ENCODE measurements at regions of chr11 and their contacts with region 1.

Region 1: DNA sequence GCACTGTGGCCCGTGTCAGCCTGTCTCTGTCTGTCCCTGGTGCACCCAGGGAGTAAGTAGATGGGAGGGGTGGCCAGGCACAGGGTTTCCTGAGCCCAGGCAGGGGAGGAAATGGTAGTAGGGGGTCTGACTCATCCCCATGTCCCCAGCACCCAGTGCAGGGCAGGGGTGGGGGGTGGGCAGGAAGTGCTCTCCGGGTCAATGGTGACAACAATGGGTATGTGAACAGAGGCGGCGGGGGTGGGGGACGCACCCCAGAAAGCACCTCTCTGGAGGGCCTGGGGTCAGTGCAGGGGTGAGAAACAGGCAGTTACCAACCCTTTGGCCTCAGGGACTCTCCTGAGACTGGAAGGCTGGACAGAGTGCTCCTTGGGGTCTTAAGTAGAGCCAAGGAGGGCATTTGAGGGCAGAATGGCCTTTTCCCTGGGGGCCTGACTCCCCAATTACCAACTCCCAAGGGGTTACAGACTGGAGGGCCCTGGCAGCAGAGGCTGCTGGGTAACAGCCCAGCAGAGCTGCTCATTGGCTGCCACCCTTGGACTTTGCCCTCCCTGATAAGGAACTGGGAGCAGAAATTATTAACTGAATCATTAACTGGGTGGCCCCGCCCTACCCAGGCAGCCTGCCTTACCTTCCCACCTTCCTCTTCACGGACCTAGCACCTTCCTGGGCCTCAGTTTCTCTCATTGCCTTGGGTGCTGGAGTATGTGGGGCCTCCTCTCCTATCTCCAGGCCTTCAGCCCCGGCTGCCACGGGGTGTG is 4.2 kb downstream of the MYRF start:
- DNase-seq: peak; percentile 73
- ATAC-seq: peak; percentile 85
- H3K4me3 ChIP-seq: no peak overlapping the region
- H3K27ac ChIP-seq: no peak overlapping the region
- H3K4me1 ChIP-seq: peaks cover 8% of the 10 kb centered on the region
- H3K27me3 ChIP-seq: no peaks in the 10 kb centered on the region; a peak in 1 of 4 replicates
- CTCF ChIP-seq: no peak
- EP300 ChIP-seq: peak; percentile 48 to 49; a peak in 3 of 4 replicates
- POLR2A ChIP-seq: no peak; the same call in 1 of the 2 replicates
- RAD21 ChIP-seq: no peak

Region 2: DNA sequence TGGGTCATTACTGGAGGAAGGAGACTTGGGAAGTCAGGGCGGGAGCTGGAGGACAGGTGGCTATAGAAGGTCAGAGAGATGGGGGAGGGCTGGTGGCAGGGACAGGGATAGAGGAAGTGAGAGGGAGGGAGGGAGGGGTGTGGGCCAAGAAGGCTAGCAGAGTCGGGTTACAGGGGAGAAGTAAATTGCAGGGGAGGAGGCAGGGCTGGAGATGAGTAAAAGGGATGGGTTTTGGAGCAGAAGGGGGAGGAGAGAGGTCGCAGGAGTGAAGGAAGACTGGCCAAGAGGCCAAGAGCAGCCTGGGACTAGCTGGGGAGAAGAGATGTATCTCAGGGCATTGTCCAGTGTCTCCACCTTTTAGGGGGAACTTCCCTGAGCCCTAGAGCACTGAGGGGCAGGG is 215.0 kb before region 1 on chr11:
- CTCF ChIA-PET with region 1: no interaction called
- POLR2A ChIA-PET with region 1: no interaction called
- RAD21 ChIA-PET with region 1: no interaction called
- SMC1A ChIA-PET with region 1: no interaction called
- in situ Hi-C with region 1: no loop called
- intact Hi-C with region 1: no loop called
- DNase-seq: no peak
- ATAC-seq: peak; percentile 55
- H3K4me3 ChIP-seq: no peak overlapping the region
- H3K27ac ChIP-seq: no peak overlapping the region
- H3K4me1 ChIP-seq: no peaks in the 10 kb centered on the region
- H3K27me3 ChIP-seq: no peaks in the 10 kb centered on the region; a peak in 2 of 4 replicates
- CTCF ChIP-seq: no peak
- EP300 ChIP-seq: no peak
- POLR2A ChIP-seq: no peak
- RAD21 ChIP-seq: no peak

Region 3: GRCh38 chr11:61688365-61689163 is 68.1 kb before region 1 on chr11:
- CTCF ChIA-PET with region 1: no interaction called
- POLR2A ChIA-PET with region 1: no interaction called
- RAD21 ChIA-PET with region 1: no interaction called
- SMC1A ChIA-PET with region 1: no interaction called
- in situ Hi-C with region 1: no loop called
- intact Hi-C with region 1: no loop called
- DNase-seq: no peak
- ATAC-seq: no peak
- H3K4me3 ChIP-seq: no peak overlapping the region
- H3K27ac ChIP-seq: no peak overlapping the region
- H3K4me1 ChIP-seq: no peaks in the 10 kb centered on the region
- H3K27me3 ChIP-seq: peaks cover 2 to 3% of the 10 kb centered on the region in 2 experiments; a peak in 3 of 4 replicates
- CTCF ChIP-seq: no peak
- EP300 ChIP-seq: no peak
- POLR2A ChIP-seq: no peak
- RAD21 ChIP-seq: no peak

Region 4: DNA sequence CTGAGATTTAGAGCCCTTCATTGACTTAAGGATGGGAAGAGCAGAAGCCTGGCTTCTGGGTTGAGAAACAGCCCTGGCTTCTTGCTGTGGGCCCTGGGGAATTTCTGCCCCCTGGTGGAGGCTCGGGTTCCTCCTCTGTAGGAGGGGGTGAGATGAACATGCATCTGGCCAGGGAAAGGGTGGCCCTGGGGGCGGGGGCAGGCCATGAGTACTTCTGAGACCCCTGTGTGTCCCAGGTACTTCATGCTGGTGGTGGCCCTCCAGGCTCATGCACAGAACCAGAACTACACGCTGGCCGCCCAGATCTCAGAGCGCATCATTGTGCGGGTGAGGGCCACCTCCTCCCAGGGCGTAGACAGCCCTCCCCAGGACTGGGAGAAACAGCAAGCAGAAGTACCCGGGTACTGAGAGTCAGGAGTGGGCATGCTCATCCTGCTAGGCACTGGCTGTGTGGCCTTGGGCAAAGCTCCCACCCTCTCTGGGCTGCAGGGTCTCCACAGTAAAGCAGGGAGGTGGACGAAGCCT is 20.0 kb after region 1 on chr11:
- CTCF ChIA-PET with region 1: interaction called, 88 read pairs
- POLR2A ChIA-PET with region 1: interaction called, 3 read pairs
- RAD21 ChIA-PET with region 1: interaction called, 5 read pairs
- SMC1A ChIA-PET with region 1: interaction called, 8 read pairs
- in situ Hi-C with region 1: no loop called
- intact Hi-C with region 1: no loop called
- DNase-seq: no peak
- ATAC-seq: peak; percentile 94
- H3K4me3 ChIP-seq: no peak overlapping the region
- H3K27ac ChIP-seq: no peak overlapping the region
- H3K4me1 ChIP-seq: no peaks in the 10 kb centered on the region; the same call in 1 of the 2 replicates
- H3K27me3 ChIP-seq: no peaks in the 10 kb centered on the region
- CTCF ChIP-seq: peak; percentile 71 to 86 (median 83)
- EP300 ChIP-seq: no peak
- POLR2A ChIP-seq: no peak
- RAD21 ChIP-seq: peak; percentile 80

Measured in GM12878 (cell line).